Activated CD8-positive, alpha-beta memory T cell treated with anti-CD3 and anti-CD28 coated beads, Interleukin-2, amount 10 ng/mL, durations not matched to agents 7 days and 5 days (primary cell): ENCODE measurements at regions of chr5 and their contacts with region 1.

Region 1: DNA sequence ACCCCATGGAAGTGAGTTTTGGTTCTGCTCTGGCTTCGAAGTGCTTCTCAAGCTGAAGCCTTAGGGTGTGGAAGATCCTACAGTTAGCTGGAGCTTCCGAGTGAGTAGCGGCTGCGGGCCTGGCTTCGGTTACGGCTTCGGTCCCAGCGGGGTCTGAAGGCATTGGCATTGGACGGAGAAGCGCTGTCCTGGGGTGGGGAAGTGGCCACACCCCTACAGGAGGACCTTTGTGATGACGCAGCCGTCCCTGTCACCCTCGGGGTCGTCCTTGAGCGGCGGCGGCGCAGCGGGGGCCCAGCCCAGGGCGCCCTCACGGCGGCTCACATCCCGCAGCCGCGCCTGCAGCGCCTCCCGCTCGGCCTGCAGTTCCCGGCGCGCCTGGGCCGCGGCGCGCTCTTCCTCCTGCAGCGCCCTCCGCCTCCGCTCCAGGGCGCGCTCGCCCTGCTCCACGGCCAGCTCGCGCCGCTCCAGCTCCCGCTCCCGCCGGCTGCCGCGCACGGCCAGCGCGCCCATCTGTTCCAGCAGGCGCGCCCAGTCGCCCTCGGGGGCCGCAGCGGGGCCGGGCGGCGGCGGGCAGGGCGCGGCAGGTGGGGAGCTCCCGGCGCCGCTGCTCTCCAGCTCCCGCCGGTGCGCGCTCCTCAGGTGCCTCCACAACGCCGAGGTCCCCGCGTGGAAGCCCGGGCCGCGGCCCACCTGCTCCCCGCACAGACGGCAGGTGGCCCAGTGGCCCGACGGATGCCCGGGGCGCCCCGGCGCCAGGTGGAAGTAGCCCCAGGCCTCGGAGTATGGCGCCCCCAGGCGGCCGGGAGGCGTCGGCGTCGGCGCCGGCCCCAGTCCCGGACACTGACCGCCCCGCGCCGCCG is 9.9 kb downstream of the ZBED3 start:
- DNase-seq: peak; percentile 66
- ATAC-seq: peak; percentile 88
- H3K4me3 Mint-ChIP-seq: peak overlapping the region; percentile 29
- H3K27ac Mint-ChIP-seq: no peak overlapping the region
- H3K4me1 Mint-ChIP-seq: peaks cover 3% of the 10 kb centered on the region
- H3K27me3 Mint-ChIP-seq: no peaks in the 10 kb centered on the region

Region 2: GRCh38 chr5:76766746-76767145 is 310.4 kb before region 1 on chr5:
- CTCF ChIA-PET with region 1: no interaction called
- DNase-seq: no peak
- ATAC-seq: no peak
- H3K4me3 Mint-ChIP-seq: no peak overlapping the region
- H3K27ac Mint-ChIP-seq: no peak overlapping the region
- H3K4me1 Mint-ChIP-seq: peaks cover 14% of the 10 kb centered on the region
- H3K27me3 Mint-ChIP-seq: no peaks in the 10 kb centered on the region

Region 3: DNA sequence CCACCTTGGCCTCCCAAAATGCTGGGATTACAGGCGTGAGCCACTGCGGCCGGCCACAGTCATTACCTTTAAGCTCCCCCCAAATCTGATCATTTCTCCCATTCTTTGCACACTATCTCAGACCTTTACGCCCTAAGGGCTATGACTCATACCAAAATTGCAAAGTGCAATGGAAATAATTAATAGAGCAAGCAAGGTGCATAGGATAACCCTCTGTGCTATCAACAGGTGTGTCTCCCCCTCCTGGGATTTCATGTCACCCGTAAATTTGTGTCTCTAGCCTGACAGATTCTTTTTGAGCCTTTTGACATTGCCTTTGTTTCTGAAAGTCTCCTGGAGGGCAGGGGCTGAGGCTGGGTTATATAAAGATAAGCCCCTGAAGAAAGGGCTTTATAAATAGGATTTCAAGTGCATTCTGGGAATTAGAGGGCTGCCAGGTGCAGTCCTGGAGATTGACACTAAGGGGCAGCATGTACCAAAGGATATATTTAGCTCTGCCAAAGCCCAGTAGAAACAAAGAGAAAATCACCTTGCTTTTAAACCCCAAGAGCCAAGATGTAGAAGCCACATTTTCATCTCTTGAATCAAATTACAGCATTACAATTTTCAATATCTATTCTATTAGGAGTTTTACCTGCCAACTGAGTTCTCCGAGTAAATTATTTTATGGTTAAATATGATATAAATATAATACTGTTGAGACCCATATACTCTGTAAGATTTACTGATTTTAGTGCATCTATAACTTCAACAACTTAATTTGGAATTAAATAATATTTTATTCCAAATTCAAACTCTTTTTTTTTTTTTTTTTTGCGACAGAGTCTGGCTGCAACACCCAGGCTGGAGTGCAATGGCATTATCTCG is 209.1 kb before region 1 on chr5:
- CTCF ChIA-PET with region 1: interaction called, 29 read pairs
- DNase-seq: peak; percentile 76
- ATAC-seq: peak; percentile 73
- H3K4me3 Mint-ChIP-seq: no peak overlapping the region
- H3K27ac Mint-ChIP-seq: no peak overlapping the region
- H3K4me1 Mint-ChIP-seq: peaks cover 4% of the 10 kb centered on the region
- H3K27me3 Mint-ChIP-seq: no peaks in the 10 kb centered on the region

Region 4: GRCh38 chr5:77030097-77031071 is 46.8 kb before region 1 on chr5 and contains the start of gene AGGF1:
- CTCF ChIA-PET with region 1: interaction called, 12 read pairs
- DNase-seq: peak; percentile 96
- ATAC-seq: peak; percentile 98
- H3K4me3 Mint-ChIP-seq: peak within 1 kb of the TSS; percentile 97
- H3K27ac Mint-ChIP-seq: peak within 1 kb of the TSS; percentile 95
- H3K4me1 Mint-ChIP-seq: peaks cover 35% of the 10 kb centered on the region
- H3K27me3 Mint-ChIP-seq: no peaks in the 10 kb centered on the region
- total RNA-seq, gene AGGF1: 28.6 to 29.3 TPM

Region 5: GRCh38 chr5:77066823-77067442 is 10.3 kb before region 1 on chr5:
- CTCF ChIA-PET with region 1: interaction called, 13 read pairs
- DNase-seq: no peak
- ATAC-seq: no peak
- H3K4me3 Mint-ChIP-seq: no peak overlapping the region
- H3K27ac Mint-ChIP-seq: no peak overlapping the region
- H3K4me1 Mint-ChIP-seq: peaks cover 15% of the 10 kb centered on the region
- H3K27me3 Mint-ChIP-seq: no peaks in the 10 kb centered on the region